Activated CD8-positive, alpha-beta T cell treated with anti-CD3 and anti-CD28 coated beads for 36 hours (primary cell): ENCODE measurements at regions of chr2 and their contacts with region 1.

Region 1: GRCh38 chr2:192162392-192163042 is 32.2 kb downstream of the TMEFF2 start:
- DNase-seq: peak; percentile 78
- ATAC-seq: peak; percentile 78
- H3K4me3 Mint-ChIP-seq: no peak overlapping the region
- H3K27ac Mint-ChIP-seq: no peak overlapping the region
- H3K4me1 Mint-ChIP-seq: peaks cover 7% of the 10 kb centered on the region
- H3K27me3 Mint-ChIP-seq: peaks cover 15% of the 10 kb centered on the region
- CTCF ChIP-seq: peak; percentile 85

Region 2: DNA sequence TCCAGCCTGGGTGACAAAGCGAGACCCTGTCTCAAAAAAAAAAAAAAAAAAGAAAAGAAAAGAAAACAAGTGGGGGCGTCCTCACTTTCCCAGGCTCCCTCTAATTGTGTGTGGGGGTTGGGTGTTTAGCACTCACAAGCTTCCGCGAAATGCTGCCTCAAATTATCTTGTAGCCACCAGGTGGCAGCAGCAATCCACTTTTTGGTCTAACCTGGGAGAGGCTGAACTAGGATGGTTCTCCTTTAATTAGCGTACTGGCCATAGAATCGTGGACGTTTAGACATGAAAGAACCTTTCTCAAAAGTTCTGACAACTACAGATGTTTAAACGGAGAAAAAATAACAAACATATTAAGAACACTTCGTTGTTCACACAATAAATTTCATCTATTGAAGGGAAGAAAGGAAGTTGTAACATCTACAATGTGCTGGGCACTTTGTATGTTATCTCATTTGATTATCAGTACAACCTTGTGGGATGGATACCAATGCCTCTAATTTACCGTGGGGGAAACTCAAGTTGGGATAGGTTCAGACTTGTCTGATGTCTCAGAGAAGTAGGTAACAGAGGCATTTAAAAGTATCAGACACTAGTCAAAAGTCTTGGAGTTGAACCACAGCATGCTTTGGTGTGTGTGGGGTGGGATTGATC is 607.3 kb before region 1 on chr2:
- CTCF ChIA-PET with region 1: interaction called, 103 read pairs
- POLR2A ChIA-PET with region 1: interaction called, 3 read pairs
- intact Hi-C with region 1: loop called (anchors 2 kb)
- DNase-seq: peak; percentile 89
- ATAC-seq: peak; percentile 94
- H3K4me3 Mint-ChIP-seq: no peak overlapping the region
- H3K27ac Mint-ChIP-seq: no peak overlapping the region
- H3K4me1 Mint-ChIP-seq: peaks cover 2% of the 10 kb centered on the region
- H3K27me3 Mint-ChIP-seq: peaks cover 9% of the 10 kb centered on the region
- CTCF ChIP-seq: peak; percentile 85

Region 3: DNA sequence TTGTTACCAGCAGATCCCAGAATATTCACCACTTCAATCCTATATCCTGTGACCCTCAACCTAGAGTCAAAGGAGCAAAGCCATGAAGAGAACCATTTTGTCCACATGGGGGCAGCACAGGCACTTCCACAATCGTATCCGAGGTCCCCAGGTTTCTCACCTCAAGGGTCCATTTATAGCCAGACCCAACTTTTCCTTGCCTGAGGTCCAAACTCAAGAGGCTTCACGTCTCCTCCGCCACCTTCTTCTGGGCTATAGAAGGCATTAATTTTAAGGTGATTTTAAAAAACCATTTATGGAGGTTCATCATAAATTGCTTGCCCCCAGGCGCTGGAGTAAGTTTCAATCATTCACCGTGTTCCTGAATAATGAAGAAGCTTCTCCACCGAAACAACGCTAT is 596.2 kb before region 1 on chr2:
- CTCF ChIA-PET with region 1: interaction called, 35 read pairs
- POLR2A ChIA-PET with region 1: no interaction called
- intact Hi-C with region 1: no loop called
- DNase-seq: peak; percentile 85
- ATAC-seq: peak; percentile 62
- H3K4me3 Mint-ChIP-seq: no peak overlapping the region
- H3K27ac Mint-ChIP-seq: no peak overlapping the region
- H3K4me1 Mint-ChIP-seq: peaks cover 21% of the 10 kb centered on the region
- H3K27me3 Mint-ChIP-seq: peaks cover 35% of the 10 kb centered on the region
- CTCF ChIP-seq: peak; percentile 75

Region 4: GRCh38 chr2:191806396-191806795 is 356.1 kb before region 1 on chr2:
- CTCF ChIA-PET with region 1: interaction called, 64 read pairs
- POLR2A ChIA-PET with region 1: no interaction called
- intact Hi-C with region 1: no loop called
- DNase-seq: no peak
- ATAC-seq: no peak
- H3K4me3 Mint-ChIP-seq: no peak overlapping the region
- H3K27ac Mint-ChIP-seq: no peak overlapping the region
- H3K4me1 Mint-ChIP-seq: no peaks in the 10 kb centered on the region
- H3K27me3 Mint-ChIP-seq: peaks cover 4% of the 10 kb centered on the region
- CTCF ChIP-seq: no peak

Region 5: DNA sequence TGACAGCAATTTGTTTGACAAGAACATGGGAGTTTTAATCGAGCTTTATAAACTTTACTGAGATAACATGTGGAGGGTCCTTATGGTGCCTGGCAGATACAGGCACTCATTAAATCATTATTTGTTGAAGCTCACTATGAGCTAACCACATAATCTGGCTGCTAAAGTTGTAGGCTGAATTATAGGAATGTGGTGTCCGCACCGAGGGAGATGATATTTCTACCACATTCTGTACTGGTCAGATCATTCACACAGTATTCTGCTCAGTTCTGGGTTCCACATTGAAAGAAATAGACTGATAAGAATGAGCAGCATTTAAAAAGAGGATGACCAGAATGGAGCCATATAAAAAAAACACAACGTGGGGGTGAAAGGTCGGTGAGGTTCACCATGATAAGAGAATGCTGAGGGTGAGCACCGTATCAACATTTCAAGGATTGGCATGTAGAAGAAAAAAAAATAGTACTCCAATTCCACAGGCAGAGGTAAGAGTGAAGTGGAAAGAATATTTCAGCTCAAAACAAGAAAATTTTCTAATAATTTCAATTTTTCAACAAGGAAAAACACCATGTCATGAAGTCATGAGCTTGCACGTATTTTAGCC is 22.2 kb before region 1 on chr2:
- CTCF ChIA-PET with region 1: interaction called, 11 read pairs
- POLR2A ChIA-PET with region 1: no interaction called
- intact Hi-C with region 1: no loop called
- DNase-seq: no peak
- ATAC-seq: no peak
- H3K4me3 Mint-ChIP-seq: no peak overlapping the region
- H3K27ac Mint-ChIP-seq: no peak overlapping the region
- H3K4me1 Mint-ChIP-seq: no peaks in the 10 kb centered on the region
- H3K27me3 Mint-ChIP-seq: peaks cover 2% of the 10 kb centered on the region
- CTCF ChIP-seq: no peak